ENCODE measurements at regions of chr7 and their contacts with region 1.

Region 1: GRCh38 chr7:16144341-16145046 is 276.8 kb downstream of the CRPPA start:
- DNase-seq: no peak
- H3K4me3 ChIP-seq: no peak overlapping the region
- H3K27ac ChIP-seq: no peak overlapping the region
- H3K4me1 ChIP-seq: no peaks in the 10 kb centered on the region
- H3K27me3 ChIP-seq: no peaks in the 10 kb centered on the region
- CTCF ChIP-seq: no peak

Region 2: GRCh38 chr7:16129431-16130116 is 14.9 kb before region 1 on chr7:
- CTCF ChIA-PET with region 1: no interaction called
- POLR2A ChIA-PET with region 1: no interaction called
- intact Hi-C with region 1: loop called (anchors 2 kb)
- DNase-seq: peak; percentile 42
- H3K4me3 ChIP-seq: no peak overlapping the region
- H3K27ac ChIP-seq: no peak overlapping the region
- H3K4me1 ChIP-seq: peaks cover 14% of the 10 kb centered on the region
- H3K27me3 ChIP-seq: no peaks in the 10 kb centered on the region
- CTCF ChIP-seq: no peak